ENCODE measurements at regions of chr12 and their contacts with region 1.

Region 1: GRCh38 chr12:99386907-99387306 is 260.6 kb upstream of the GARIN6 start:
- DNase-seq: no peak
- H3K4me3 ChIP-seq: no peak overlapping the region
- CTCF ChIP-seq: peak; percentile 27

Region 2: DNA sequence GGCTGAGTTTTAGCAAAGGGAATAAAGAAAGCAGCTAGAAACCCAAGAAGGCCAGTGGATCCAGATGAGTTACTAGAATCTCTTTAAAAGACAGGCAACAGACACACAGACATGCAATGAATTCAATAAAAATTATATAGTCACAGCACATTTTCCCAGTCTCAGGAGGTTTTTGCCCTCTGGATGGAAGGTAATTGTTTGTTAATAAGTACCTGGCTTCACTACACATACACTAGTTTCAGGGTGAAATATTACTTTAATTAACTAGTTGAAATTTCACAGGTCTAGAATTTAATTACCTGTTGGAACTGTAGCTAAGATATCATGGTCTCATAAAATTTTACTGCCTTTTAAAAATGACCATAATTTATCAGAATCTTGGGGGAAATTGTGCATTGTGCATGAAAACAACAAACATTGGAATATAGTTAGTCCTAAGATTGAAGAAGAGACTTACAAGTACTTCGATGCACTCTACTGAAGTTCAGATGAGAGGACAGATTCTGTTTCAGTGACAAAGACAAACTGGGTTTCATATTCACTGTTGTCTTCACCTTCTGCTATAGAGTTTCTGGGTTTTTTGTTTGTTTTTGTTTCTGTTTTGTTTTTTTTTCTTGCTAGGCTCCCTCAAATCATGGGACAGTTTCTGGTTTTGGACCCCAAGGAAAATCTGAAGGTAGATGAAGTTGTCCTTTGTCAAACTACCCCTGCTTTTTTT is 16.3 kb before region 1 on chr12:
- CTCF ChIA-PET with region 1: no interaction called
- POLR2A ChIA-PET with region 1: no interaction called
- DNase-seq: no peak
- H3K4me3 ChIP-seq: no peak overlapping the region
- CTCF ChIP-seq: no peak

Region 3: GRCh38 chr12:99558109-99558508 is 171.2 kb after region 1 on chr12:
- CTCF ChIA-PET with region 1: no interaction called
- POLR2A ChIA-PET with region 1: no interaction called
- DNase-seq: no peak
- H3K4me3 ChIP-seq: no peak overlapping the region
- CTCF ChIP-seq: no peak

Region 4: GRCh38 chr12:99619389-99620158 is 232.7 kb after region 1 on chr12:
- CTCF ChIA-PET with region 1: interaction called, 16 read pairs
- POLR2A ChIA-PET with region 1: no interaction called
- DNase-seq: no peak
- H3K4me3 ChIP-seq: no peak overlapping the region
- CTCF ChIP-seq: peak; percentile 58

Region 5: GRCh38 chr12:99658671-99659349 is 271.9 kb after region 1 on chr12:
- CTCF ChIA-PET with region 1: interaction called, 17 read pairs
- POLR2A ChIA-PET with region 1: no interaction called
- DNase-seq: no peak
- H3K4me3 ChIP-seq: no peak overlapping the region
- CTCF ChIP-seq: no peak